PC-3 (cell line): ENCODE measurements at regions of chr5 and their contacts with region 1.

Region 1: DNA sequence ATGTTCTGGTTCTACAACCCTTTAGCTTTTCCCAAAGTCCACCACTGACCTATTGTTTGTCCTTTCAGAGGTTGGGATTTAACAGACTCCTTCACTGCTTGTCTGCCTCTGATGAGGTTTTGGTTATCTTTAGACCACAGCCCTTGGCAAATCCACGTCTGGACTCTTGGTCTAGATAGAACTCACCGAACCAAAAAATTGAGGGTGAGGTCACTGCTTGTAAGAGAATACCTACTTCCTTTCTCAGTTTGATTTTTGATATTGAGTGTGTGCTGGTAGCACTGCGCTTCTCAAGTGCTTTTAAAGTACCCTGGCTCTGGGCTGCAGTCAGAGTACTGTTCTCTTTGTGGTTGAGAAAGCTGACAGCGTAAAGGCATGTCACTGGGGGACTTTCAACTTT is 61.7 kb downstream of the JMY start:
- DNase-seq: peak; percentile 43
- ATAC-seq: no peak
- H3K4me3 ChIP-seq: no peak overlapping the region
- H3K27ac ChIP-seq: 0 out of 2 replicates have a peak overlapping the region, but pooled peaks have one; percentile 7
- H3K4me1 ChIP-seq: peaks cover 47% of the 10 kb centered on the region
- H3K27me3 ChIP-seq: no peaks in the 10 kb centered on the region
- CTCF ChIP-seq: no peak

Region 2: GRCh38 chr5:79241535-79241979 is 56.1 kb before region 1 on chr5:
- CTCF ChIA-PET with region 1: interaction called, 3 read pairs
- POLR2A ChIA-PET with region 1: no interaction called
- intact Hi-C with region 1: loop called (anchors 1 kb)
- DNase-seq: peak; percentile 63
- ATAC-seq: peak; percentile 65
- H3K4me3 ChIP-seq: peak overlapping the region; percentile 48
- H3K27ac ChIP-seq: peak overlapping the region; percentile 24; the same call in 1 of the 2 replicates
- H3K4me1 ChIP-seq: peaks cover 26% of the 10 kb centered on the region
- H3K27me3 ChIP-seq: no peaks in the 10 kb centered on the region
- CTCF ChIP-seq: no peak

Region 3: DNA sequence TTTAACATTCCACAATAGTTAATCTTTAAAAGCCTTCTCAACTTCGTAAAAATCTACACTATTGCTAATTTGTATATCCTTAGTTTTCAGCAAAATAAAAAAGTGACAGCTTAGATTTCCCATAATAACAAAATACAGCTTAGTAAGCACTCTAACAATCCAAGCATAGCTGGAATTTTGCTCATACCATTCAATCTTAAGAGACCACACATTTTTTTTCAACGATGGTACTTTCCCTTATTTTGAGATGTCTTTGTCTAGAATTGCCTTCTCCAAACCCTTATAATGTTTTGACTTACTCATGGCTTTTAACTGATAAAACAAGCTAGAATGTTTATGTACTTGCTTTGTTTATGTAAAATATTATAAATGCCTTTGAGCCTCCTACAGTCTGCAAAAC is 150.7 kb after region 1 on chr5:
- CTCF ChIA-PET with region 1: no interaction called
- POLR2A ChIA-PET with region 1: no interaction called
- intact Hi-C with region 1: no loop called
- DNase-seq: no peak
- ATAC-seq: no peak
- H3K4me3 ChIP-seq: no peak overlapping the region
- H3K27ac ChIP-seq: no peak overlapping the region
- H3K4me1 ChIP-seq: no peaks in the 10 kb centered on the region
- H3K27me3 ChIP-seq: no peaks in the 10 kb centered on the region
- CTCF ChIP-seq: no peak

Region 4: DNA sequence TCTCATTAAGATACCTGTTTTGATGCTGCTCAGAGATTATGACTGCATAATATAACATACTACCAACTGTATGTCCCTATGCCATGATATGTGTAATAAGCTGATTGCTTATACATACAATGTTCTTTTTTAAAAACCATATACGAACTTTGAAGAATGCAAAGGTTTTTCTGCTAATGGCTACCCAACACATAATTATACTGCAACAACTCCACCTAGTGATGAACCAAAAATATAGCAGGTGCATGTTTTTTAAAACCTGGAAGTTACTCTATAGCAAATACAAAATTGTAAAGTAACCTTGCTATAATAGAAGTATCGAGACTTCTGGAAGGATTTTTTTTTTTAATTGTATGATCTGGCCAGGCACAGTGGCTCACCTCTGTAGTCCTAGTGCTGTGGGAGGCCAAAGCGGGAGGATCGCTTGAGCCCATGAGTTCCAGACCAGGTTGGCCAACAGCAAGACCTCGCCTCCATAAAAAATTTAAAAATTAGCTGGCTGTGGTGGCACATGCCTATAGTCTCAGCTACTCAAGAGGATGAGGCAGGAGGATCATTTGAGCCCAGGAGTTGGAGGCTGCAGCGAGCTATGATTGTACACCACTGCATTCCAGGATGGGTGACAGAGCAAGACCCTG is 167.2 kb after region 1 on chr5:
- CTCF ChIA-PET with region 1: no interaction called
- POLR2A ChIA-PET with region 1: no interaction called
- intact Hi-C with region 1: loop called (anchors 10 kb)
- DNase-seq: peak; percentile 52
- ATAC-seq: peak; percentile 55
- H3K4me3 ChIP-seq: peak overlapping the region; percentile 40; the same call in 1 of the 2 replicates
- H3K27ac ChIP-seq: no peak overlapping the region
- H3K4me1 ChIP-seq: no peaks in the 10 kb centered on the region
- H3K27me3 ChIP-seq: no peaks in the 10 kb centered on the region
- CTCF ChIP-seq: peak; percentile 80

Region 5: GRCh38 chr5:79560771-79561524 is 263.3 kb after region 1 on chr5:
- CTCF ChIA-PET with region 1: no interaction called
- POLR2A ChIA-PET with region 1: no interaction called
- intact Hi-C with region 1: no loop called
- DNase-seq: no peak
- ATAC-seq: no peak
- H3K4me3 ChIP-seq: no peak overlapping the region
- H3K27ac ChIP-seq: no peak overlapping the region
- H3K4me1 ChIP-seq: peaks cover 8% of the 10 kb centered on the region
- H3K27me3 ChIP-seq: no peaks in the 10 kb centered on the region
- CTCF ChIP-seq: no peak

Region 6: GRCh38 chr5:80275347-80275746 is 977.7 kb after region 1 on chr5:
- CTCF ChIA-PET with region 1: no interaction called
- POLR2A ChIA-PET with region 1: interaction called, 10 read pairs
- intact Hi-C with region 1: no loop called
- DNase-seq: peak; percentile 28
- ATAC-seq: no peak; the same call in 1 of the 2 replicates
- H3K4me3 ChIP-seq: no peak overlapping the region
- H3K27ac ChIP-seq: no peak overlapping the region
- H3K4me1 ChIP-seq: no peaks in the 10 kb centered on the region
- H3K27me3 ChIP-seq: no peaks in the 10 kb centered on the region
- CTCF ChIP-seq: peak; percentile 61